OCI-LY7 (cell line): ENCODE measurements at regions of chr9 and their contacts with region 1.

Region 1: DNA sequence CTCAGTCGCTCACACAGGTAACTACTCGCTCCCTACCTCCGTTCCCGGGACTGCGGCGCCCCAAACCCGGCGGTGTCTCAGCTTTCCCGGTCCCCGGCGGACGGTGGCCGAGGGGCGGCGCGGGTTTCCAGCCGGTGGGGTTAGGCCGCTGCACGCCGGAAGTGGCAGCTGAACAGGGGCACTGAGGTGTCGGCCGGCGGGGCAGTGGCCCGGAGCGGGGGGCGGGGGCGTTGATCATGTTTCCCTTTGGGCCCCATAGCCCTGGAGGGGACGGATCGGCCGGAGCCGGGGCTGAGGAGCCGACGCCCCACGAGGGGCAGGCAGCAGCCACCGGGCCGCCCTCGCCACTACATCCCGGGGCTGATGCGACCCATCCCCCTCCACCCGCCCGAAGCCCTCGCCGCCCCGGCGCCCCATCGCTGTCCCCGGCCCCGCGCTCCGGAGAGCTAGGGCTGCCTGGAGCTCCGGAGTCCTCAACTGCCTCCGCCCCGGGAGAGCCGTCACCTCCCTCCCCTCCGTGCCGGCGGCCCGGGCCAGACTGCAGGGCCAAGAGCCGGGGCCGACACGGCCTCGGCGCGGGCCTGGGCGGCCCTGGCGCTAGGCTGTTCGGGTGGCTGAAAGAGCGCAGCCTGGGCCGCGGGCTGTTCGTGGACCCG is at the start of gene DCAF10:
- DNase-seq: peak; percentile 90
- H3K4me3 ChIP-seq: peak within 1 kb of the TSS; percentile 93
- H3K27ac ChIP-seq: peak within 1 kb of the TSS; percentile 69
- H3K4me1 ChIP-seq: peaks cover 27% of the 10 kb centered on the region
- CTCF ChIP-seq: no peak
- total RNA-seq, gene DCAF10: 10.9 and 12.8 TPM in 2 replicates

Region 2: GRCh38 chr9:37784616-37785483 is 15.9 kb before region 1 on chr9 and contains the start of gene EXOSC3:
- CTCF ChIA-PET with region 1: no interaction called
- POLR2A ChIA-PET with region 1: interaction called, 15 read pairs
- intact Hi-C with region 1: loop called (anchors 1 kb)
- DNase-seq: peak; percentile 94
- H3K4me3 ChIP-seq: peak within 1 kb of the TSS; percentile 95
- H3K27ac ChIP-seq: peak within 1 kb of the TSS; percentile 75
- H3K4me1 ChIP-seq: peaks cover 24% of the 10 kb centered on the region
- CTCF ChIP-seq: no peak
- total RNA-seq, gene EXOSC3: 82.6 and 111 TPM in 2 replicates